Heart left ventricle (tissue), 16 donors: ENCODE measurements at regions of chr11 and their contacts with region 1.

Region 1: GRCh38 chr11:73818846-73819245 is 31.2 kb downstream of the MRPL48 start:
- DNase-seq: no peak
- ATAC-seq: no peak
- H3K4me3 ChIP-seq: no peak overlapping the region
- H3K27ac ChIP-seq: no peak overlapping the region
- H3K4me1 ChIP-seq: peaks cover 0 to 7% (median 0%) of the 10 kb centered on the region in 12 donors
- H3K27me3 ChIP-seq: no peaks in the 10 kb centered on the region
- CTCF ChIP-seq: no peak
- POLR2A ChIP-seq: no peak

Region 2: DNA sequence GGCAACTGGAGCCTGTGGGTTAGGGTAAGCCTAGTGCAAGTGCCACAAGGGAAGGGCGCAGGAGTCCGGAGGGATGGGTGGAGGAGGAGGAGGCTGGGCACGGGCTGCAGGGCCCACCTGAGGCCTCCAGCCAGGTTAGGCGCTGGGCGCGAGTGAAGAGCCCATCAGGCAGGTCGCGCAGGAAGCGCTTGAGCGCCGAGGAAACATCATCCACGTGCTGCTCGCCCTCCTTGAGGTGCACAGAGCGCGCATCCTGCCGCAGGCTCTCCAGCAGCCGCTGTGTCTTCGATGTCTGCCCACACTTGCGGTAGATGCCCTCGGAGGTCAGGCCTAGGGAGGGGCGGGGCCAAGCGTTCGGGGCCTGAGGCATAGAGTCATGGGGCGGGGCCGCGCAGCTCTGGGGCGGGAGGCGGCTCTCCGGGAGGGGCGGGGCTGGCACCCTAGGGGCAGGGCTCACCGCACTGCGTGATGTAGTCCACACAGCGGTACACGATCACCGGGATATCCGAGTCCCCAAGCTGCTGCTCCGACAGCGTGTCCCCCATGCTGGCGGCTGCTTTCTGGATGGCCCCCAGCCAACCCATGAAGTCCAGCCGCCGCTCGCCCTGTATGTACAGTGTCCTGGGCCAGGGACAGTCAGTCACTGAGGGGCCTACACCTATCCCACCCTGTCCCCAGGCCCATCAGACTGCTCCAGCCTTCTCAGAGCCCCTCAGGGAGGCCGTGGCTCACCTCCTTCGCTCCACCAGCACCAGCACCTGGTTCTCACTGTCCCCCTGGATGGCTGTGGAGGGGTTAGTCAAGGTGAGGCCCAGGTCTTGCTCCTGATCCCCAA is 1121.8 kb before region 1 on chr11:
- intact Hi-C with region 1: loop called in 1 of 10 experiments (anchors 10 kb)
- DNase-seq: peak in 3 of 5 donors; percentile 65 to 81 (median 68)
- ATAC-seq: peak in 3 of 4 donors; percentile 49 to 65 (median 55)
- H3K4me3 ChIP-seq: no peak overlapping the region
- H3K27ac ChIP-seq: peak overlapping the region in 1 of 12 donors; percentile 1
- H3K4me1 ChIP-seq: peaks cover 0 to 32% (median 5%) of the 10 kb centered on the region in 12 donors
- H3K27me3 ChIP-seq: no peaks in the 10 kb centered on the region
- CTCF ChIP-seq: no peak
- POLR2A ChIP-seq: no peak

Region 3: DNA sequence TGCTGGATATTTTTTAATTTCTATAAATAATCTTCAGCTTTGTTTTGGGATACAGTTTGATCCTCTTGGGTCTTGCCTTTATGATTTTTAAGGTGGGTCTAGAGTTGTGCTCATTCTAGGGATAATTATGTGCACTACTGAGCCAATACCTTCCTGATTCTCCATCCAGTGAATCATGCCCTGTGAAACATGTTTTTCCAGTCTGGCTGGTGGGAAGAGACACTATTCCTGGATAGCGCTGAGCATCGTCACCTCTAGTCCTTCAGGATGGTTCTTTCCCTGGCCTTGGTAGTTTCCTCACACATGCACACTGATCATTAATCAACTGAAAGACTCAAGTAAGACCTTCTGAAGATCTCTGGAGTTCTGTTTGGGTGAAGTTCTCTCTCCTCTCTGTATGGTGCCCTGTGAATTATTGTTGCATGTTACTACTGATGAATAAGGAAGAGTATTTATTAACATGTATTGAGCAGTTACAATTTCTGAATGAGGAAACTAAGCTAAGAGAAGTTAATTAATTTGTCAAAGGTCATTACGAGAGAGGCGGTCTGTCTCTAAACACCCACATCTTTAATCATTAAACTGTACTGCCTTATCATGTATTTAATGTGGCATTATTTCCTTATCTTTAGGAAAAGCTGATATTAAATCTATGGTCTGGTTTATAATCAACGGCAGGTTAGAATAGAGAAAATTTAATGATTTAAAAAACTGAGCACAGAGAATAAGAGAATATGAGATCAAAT is 713.8 kb after region 1 on chr11:
- intact Hi-C with region 1: no loop called
- DNase-seq: no peak
- ATAC-seq: no peak
- H3K4me3 ChIP-seq: no peak overlapping the region
- H3K27ac ChIP-seq: no peak overlapping the region
- H3K4me1 ChIP-seq: peaks cover 0 to 10% (median 0%) of the 10 kb centered on the region in 12 donors
- H3K27me3 ChIP-seq: no peaks in the 10 kb centered on the region
- CTCF ChIP-seq: no peak
- POLR2A ChIP-seq: no peak